ENCODE measurements at regions of chr17 and their contacts with region 1.

Region 1: DNA sequence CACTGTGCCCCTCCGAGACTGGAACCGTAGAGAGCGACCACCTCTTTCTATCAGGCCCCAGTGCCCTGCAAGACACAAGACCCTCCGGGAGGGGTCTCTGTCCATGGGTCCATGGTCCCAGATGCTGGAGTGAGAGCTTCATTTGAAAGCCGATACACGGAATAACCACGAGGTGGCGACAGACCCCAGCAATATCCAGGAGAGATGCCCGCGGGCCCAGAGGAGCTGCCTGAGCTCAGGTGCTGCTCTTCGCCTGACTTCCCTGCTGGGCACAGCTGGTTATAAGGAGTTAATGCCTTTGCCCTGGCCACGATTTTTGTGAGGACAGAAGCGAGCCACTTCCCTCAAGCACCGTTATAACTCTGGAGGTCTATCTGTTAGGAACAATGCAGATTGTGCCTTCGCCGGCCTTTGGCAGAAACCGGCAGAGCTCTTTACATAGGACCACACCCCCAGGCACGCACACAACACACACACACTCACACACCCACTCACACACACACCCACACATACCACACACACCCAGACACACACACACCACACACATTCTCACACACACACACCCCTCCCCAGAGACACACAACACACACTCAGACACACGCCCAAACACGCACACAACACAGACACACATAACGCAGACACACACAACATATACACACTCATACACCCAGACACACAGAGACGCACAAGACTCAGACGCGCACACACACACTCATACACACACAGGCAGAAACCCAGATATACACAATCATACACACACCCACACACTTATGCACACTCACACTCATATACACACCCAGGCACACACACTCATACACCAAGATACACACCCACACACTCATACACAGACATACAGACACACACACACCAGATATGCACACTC is 436.4 kb downstream of the SOX9 start:
- DNase-seq: peak; percentile 78
- ATAC-seq: peak; percentile 85
- H3K4me3 Mint-ChIP-seq: no peak overlapping the region
- H3K27ac Mint-ChIP-seq: no peak overlapping the region
- H3K4me1 Mint-ChIP-seq: no peaks in the 10 kb centered on the region
- H3K27me3 Mint-ChIP-seq: no peaks in the 10 kb centered on the region

Region 2: GRCh38 chr17:72488551-72489244 is 68.5 kb before region 1 on chr17:
- CTCF ChIA-PET with region 1: no interaction called
- POLR2A ChIA-PET with region 1: no interaction called
- DNase-seq: no peak
- ATAC-seq: no peak
- H3K4me3 Mint-ChIP-seq: no peak overlapping the region
- H3K27ac Mint-ChIP-seq: no peak overlapping the region
- H3K4me1 Mint-ChIP-seq: no peaks in the 10 kb centered on the region
- H3K27me3 Mint-ChIP-seq: peaks cover 6% of the 10 kb centered on the region

Region 3: GRCh38 chr17:72592242-72592966 is 35.2 kb after region 1 on chr17:
- CTCF ChIA-PET with region 1: interaction called, 10 read pairs
- POLR2A ChIA-PET with region 1: no interaction called
- DNase-seq: peak; percentile 74
- ATAC-seq: peak; percentile 90
- H3K4me3 Mint-ChIP-seq: peak overlapping the region; percentile 81
- H3K27ac Mint-ChIP-seq: no peak overlapping the region
- H3K4me1 Mint-ChIP-seq: peaks cover 27% of the 10 kb centered on the region
- H3K27me3 Mint-ChIP-seq: peaks cover 69% of the 10 kb centered on the region

Region 4: GRCh38 chr17:72665852-72666851 is 109.0 kb after region 1 on chr17:
- CTCF ChIA-PET with region 1: no interaction called
- POLR2A ChIA-PET with region 1: no interaction called
- DNase-seq: no peak
- ATAC-seq: no peak
- H3K4me3 Mint-ChIP-seq: no peak overlapping the region
- H3K27ac Mint-ChIP-seq: no peak overlapping the region
- H3K4me1 Mint-ChIP-seq: no peaks in the 10 kb centered on the region
- H3K27me3 Mint-ChIP-seq: no peaks in the 10 kb centered on the region

Region 5: GRCh38 chr17:72985881-72986720 is 428.9 kb after region 1 on chr17:
- CTCF ChIA-PET with region 1: interaction called, 12 read pairs
- POLR2A ChIA-PET with region 1: no interaction called
- DNase-seq: peak; percentile 69
- ATAC-seq: peak; percentile 81
- H3K4me3 Mint-ChIP-seq: no peak overlapping the region
- H3K27ac Mint-ChIP-seq: no peak overlapping the region
- H3K4me1 Mint-ChIP-seq: no peaks in the 10 kb centered on the region
- H3K27me3 Mint-ChIP-seq: no peaks in the 10 kb centered on the region

Region 6: DNA sequence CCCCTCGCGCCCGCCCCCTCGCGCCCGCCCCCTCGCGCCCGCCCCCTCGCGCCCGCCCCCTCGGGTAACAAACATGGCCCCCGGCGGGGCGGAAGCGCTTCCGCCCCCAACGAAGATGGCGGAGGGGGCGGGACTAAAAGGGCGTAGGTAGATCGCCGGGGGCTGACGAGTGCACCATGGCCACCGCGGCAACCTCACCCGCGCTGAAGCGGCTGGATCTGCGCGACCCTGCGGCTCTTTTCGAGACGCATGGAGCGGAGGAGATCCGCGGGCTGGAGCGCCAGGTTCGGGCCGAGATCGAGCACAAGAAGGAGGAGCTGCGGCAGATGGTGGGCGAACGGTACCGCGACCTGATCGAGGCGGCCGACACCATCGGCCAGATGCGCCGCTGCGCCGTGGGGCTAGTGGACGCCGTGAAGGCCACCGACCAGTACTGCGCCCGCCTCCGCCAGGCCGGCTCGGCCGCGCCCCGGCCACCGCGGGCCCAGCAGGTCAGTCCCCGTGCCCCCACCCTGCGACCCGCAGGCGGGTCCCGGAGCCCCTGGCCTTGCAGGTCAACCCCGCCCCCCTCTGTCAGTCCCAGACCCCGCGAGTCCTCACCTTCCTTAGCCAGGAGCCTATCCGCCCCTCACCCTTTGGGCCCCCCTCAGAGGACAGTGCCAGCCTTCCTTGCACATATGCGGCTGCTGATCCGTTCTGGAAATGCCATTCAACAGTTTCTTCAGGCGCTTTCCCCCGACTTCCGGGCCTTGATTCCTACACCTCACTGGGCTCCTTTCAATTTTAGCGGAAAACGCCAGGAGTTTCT is 635.9 kb after region 1 on chr17 and contains the start of gene COG1:
- CTCF ChIA-PET with region 1: interaction called, 10 read pairs
- POLR2A ChIA-PET with region 1: no interaction called
- DNase-seq: peak; percentile 90
- ATAC-seq: peak; percentile 84
- H3K4me3 Mint-ChIP-seq: peak within 1 kb of the TSS; percentile 95
- H3K27ac Mint-ChIP-seq: peak within 1 kb of the TSS; percentile 97
- H3K4me1 Mint-ChIP-seq: peaks cover 34% of the 10 kb centered on the region
- H3K27me3 Mint-ChIP-seq: no peaks in the 10 kb centered on the region
- total RNA-seq, gene COG1: 25.2 to 30.5 TPM